Right ventricle myocardium superior (tissue), 1 donor: ENCODE measurements at regions of chr16 and their contacts with region 1.

Region 1: GRCh38 chr16:14013571-14014282 is 57.4 kb upstream of the MRTFB start:
- DNase-seq: no peak
- ATAC-seq: peak; percentile 78

Region 2: GRCh38 chr16:13997933-13998332 is 15.8 kb before region 1 on chr16:
- intact Hi-C with region 1: no loop called
- DNase-seq: no peak
- ATAC-seq: no peak

Region 3: DNA sequence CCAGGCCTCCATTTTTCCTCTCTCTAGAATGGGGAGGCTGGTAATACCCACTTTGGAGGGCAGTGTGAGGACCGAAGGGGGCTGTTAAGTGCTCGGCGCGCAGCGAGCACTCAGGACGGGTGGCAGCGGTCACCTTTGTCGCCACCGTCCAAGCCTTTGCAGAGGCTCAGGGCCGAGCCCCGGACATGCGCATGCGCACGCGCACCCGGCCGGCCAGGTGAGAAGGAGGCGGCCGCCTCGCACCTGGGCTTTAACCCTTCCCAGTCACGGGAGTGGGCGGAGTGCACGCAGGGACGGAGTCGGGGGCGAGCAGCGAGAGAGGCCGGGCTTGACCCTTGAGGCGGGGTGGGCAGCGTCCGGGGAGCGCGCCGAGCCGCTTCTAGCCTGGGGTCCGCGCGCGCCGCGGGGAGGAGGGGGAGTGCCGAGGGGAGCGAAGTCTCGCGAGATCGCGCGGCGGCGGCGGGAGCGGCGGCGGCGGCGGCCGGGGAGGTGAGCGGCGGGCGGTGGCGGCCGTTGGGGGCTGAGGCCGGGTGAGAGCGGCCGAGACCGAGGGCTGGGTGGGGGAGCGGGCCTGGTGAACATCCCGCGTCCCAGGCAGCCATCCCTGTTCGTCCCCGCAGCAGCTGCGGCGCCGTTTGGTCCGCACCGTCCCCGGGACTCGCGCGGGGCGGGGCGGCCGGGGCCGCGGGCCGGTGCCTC is 57.3 kb after region 1 on chr16 and contains the start of gene MRTFB:
- intact Hi-C with region 1: loop called (anchors 10 kb)
- DNase-seq: peak; percentile 89
- ATAC-seq: peak; percentile 95
- total RNA-seq, gene MRTFB: 22.1 TPM

Region 4: DNA sequence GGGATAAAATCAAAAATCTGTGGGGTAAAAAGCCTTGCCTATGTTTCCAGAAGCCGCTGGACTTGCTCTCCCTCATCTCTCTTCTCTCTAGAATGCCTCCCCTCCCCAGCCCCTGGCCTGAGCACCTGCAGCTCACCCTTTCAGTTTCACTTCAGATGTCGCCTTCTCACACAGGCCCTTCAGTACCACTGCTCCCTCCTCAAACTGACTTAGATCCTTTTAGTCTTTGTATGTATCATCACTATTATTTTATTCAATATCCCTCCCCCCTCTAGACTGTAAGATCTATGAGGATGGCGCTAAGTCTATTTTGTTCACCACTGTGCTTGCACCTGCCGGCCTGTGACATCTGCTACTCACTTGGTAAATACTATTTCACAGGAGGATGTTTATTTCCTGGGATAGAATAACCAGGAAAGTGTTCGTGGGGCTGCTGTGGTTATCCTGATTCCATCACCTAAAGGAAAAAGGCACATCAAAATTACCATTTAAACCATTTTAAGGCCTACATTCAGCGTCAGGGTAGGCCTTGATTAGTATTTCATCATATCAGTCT is 179.7 kb after region 1 on chr16:
- intact Hi-C with region 1: loop called (anchors 10 kb)
- DNase-seq: no peak
- ATAC-seq: no peak